ENCODE measurements at regions of chr6 and their contacts with region 1.

Region 1: DNA sequence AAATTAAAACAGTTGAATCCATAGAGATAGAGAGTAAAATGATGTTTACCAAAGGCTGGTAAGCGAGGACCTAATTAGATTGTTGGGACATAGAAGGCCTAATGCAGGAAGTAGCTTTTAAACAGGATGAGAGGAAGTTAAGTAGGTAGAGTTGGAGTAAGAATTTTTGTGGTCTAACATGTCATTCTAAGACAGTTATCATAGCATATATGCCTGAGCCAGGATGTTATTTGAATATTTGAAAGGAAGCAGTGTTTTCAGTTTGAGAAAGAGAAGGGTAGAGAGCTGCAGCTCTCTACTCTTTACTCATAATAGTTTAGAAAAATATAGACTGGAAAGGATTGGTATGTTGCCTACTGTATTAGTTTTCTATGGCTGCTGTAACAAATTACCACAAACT is 121.6 kb downstream of the MEI4 start:
- DNase-seq: no peak
- ATAC-seq: no peak
- H3K4me3 ChIP-seq: no peak overlapping the region
- H3K27ac ChIP-seq: no peak overlapping the region
- H3K4me1 ChIP-seq: no peaks in the 10 kb centered on the region
- H3K27me3 ChIP-seq: no peaks in the 10 kb centered on the region
- CTCF ChIP-seq: no peak

Region 2: GRCh38 chr6:77543601-77544000 is 230.9 kb before region 1 on chr6:
- intact Hi-C with region 1: no loop called
- DNase-seq: no peak
- ATAC-seq: no peak
- H3K4me3 ChIP-seq: no peak overlapping the region
- H3K27ac ChIP-seq: no peak overlapping the region
- H3K4me1 ChIP-seq: no peaks in the 10 kb centered on the region
- H3K27me3 ChIP-seq: no peaks in the 10 kb centered on the region
- CTCF ChIP-seq: no peak

Region 3: GRCh38 chr6:77837034-77837784 is 62.8 kb after region 1 on chr6:
- intact Hi-C with region 1: loop called in 1 of 10 experiments (anchors 2 kb)
- DNase-seq: no peak
- ATAC-seq: no peak
- H3K4me3 ChIP-seq: no peak overlapping the region
- H3K27ac ChIP-seq: no peak overlapping the region
- H3K4me1 ChIP-seq: no peaks in the 10 kb centered on the region
- H3K27me3 ChIP-seq: no peaks in the 10 kb centered on the region
- CTCF ChIP-seq: no peak

Measured in heart right ventricle (tissue), 16 donors.